ENCODE measurements at regions of chr22 and their contacts with region 1.

Region 1: DNA sequence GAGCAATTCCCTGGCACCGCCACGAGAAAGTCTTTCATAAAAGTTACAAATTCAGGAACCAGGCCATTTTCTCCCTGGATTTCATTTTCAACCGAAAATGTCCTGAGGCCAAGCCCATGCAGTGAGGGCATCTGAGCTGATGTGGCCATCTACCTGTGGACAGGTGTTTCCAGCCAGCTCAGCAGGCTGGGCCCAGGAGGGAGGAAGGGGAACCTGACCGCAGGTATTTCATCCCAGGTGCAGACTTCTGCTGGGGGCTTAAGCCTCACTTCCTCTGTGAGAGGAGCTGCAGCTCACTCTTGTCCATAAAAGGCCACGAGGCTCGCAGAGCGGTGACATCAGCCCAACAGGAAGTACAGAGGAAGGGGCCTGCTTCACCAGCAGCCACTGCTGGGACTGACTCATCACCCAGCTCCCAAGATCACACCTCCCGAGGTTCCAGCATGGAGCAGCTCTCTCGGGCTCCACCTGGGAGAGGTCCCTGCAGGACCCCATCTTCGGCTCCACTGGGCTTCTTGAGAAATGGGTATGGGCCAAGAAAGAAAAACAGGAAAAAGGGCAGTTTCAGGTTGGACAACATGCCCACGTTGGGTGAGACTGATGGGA is 56.4 kb downstream of the MYH9 start:
- DNase-seq: peak; percentile 92
- H3K4me3 Mint-ChIP-seq: peak overlapping the region; percentile 80
- H3K27ac Mint-ChIP-seq: peak overlapping the region; percentile 100
- H3K4me1 Mint-ChIP-seq: peaks cover 97% of the 10 kb centered on the region
- H3K27me3 Mint-ChIP-seq: no peaks in the 10 kb centered on the region

Region 2: GRCh38 chr22:36356708-36357694 is 25.6 kb after region 1 on chr22:
- CTCF ChIA-PET with region 1: interaction called, 7 read pairs
- intact Hi-C with region 1: loop called (anchors 1 kb)
- DNase-seq: peak; percentile 78
- H3K4me3 Mint-ChIP-seq: peak overlapping the region; percentile 73
- H3K27ac Mint-ChIP-seq: peak overlapping the region; percentile 96
- H3K4me1 Mint-ChIP-seq: peaks cover 98% of the 10 kb centered on the region
- H3K27me3 Mint-ChIP-seq: no peaks in the 10 kb centered on the region

Region 3: GRCh38 chr22:36369922-36370791 is 38.7 kb after region 1 on chr22:
- CTCF ChIA-PET with region 1: interaction called, 21 read pairs
- intact Hi-C with region 1: loop called (anchors 1 kb)
- DNase-seq: peak; percentile 57
- H3K4me3 Mint-ChIP-seq: peak overlapping the region; percentile 63
- H3K27ac Mint-ChIP-seq: peak overlapping the region; percentile 96
- H3K4me1 Mint-ChIP-seq: peaks cover 97% of the 10 kb centered on the region
- H3K27me3 Mint-ChIP-seq: no peaks in the 10 kb centered on the region

Region 4: GRCh38 chr22:36387752-36388518 is 56.5 kb after region 1 on chr22 and contains the start of gene MYH9:
- CTCF ChIA-PET with region 1: interaction called, 6 read pairs
- intact Hi-C with region 1: loop called (anchors 1 kb)
- DNase-seq: peak; percentile 100
- H3K4me3 Mint-ChIP-seq: peak within 1 kb of the TSS; percentile 83
- H3K27ac Mint-ChIP-seq: peak within 1 kb of the TSS; percentile 96
- H3K4me1 Mint-ChIP-seq: peaks cover 25% of the 10 kb centered on the region
- H3K27me3 Mint-ChIP-seq: no peaks in the 10 kb centered on the region
- total RNA-seq, gene MYH9: 574 to 625 TPM

Region 5: DNA sequence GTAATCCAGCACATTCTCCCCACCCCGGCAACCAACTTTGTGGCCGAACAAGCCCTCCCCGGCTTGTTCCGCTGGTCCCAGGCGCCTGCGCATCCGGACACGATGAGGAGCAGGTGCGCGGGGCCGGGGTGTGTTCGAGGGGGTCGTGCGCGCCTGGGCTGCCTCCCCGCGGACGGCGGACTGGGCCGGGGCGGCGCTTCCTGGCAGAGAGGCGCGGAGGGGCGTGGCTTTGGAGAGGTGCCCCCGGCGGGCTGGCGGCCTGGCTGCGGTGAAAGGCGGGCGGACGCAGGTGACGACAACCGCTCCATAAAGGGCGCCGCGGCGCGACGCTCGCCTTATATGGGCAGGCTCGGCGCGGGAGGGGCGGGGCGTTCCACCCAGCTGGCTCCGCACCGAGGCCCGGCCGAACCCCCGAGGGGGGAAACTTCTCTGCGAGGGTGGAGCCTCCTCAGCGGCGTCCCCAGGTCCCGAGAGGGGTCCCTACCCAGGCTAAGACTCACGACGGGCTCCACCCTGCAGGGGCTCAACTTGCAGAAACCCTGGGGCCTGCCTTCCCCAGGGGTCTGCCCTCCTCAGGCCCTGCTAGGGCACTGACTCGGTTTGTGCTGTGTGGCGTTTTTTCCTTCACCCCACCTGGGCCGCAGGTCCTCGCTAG is 123.6 kb after region 1 on chr22:
- CTCF ChIA-PET with region 1: interaction called, 6 read pairs
- intact Hi-C with region 1: loop called (anchors 1 kb)
- DNase-seq: peak; percentile 96
- H3K4me3 Mint-ChIP-seq: peak overlapping the region; percentile 76
- H3K27ac Mint-ChIP-seq: peak overlapping the region; percentile 75
- H3K4me1 Mint-ChIP-seq: peaks cover 37% of the 10 kb centered on the region
- H3K27me3 Mint-ChIP-seq: no peaks in the 10 kb centered on the region

Region 6: GRCh38 chr22:36528795-36529751 is 197.7 kb after region 1 on chr22 and contains the start of gene EIF3D:
- CTCF ChIA-PET with region 1: no interaction called
- intact Hi-C with region 1: loop called (anchors 1 kb)
- DNase-seq: peak; percentile 99
- H3K4me3 Mint-ChIP-seq: peak within 1 kb of the TSS; percentile 96
- H3K27ac Mint-ChIP-seq: peak within 1 kb of the TSS; percentile 99
- H3K4me1 Mint-ChIP-seq: peaks cover 31% of the 10 kb centered on the region
- H3K27me3 Mint-ChIP-seq: no peaks in the 10 kb centered on the region
- total RNA-seq, gene EIF3D: 334 to 341 TPM